Gastrocnemius medialis (tissue), 4 donors: ENCODE measurements at regions of chr4 and their contacts with region 1.

Region 1: DNA sequence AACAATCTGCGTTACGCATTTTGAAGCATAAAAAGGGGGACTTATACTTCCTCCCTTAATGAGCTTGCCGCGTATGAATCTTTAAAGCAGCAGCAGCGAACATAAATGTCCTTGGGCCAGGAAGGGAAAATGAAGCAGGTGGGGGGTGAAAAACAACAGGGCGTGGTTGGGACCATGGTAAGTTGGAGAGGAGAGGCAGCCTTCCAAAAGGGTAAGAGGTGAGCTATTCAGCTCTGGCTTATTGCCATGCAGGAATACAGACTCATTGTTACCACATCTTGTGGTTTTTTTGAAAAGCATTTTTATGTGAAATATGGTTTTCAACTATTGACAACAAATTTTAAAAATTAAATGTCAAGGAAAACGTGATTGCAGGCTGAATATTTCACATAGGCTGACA is 710.7 kb upstream of the FAM241A start:
- DNase-seq: no peak
- ATAC-seq: no peak
- H3K4me3 ChIP-seq: no peak overlapping the region
- H3K27ac ChIP-seq: no peak overlapping the region
- H3K4me1 ChIP-seq: no peaks in the 10 kb centered on the region
- H3K27me3 ChIP-seq: no peaks in the 10 kb centered on the region
- CTCF ChIP-seq: no peak
- POLR2A ChIP-seq: no peak

Region 2: DNA sequence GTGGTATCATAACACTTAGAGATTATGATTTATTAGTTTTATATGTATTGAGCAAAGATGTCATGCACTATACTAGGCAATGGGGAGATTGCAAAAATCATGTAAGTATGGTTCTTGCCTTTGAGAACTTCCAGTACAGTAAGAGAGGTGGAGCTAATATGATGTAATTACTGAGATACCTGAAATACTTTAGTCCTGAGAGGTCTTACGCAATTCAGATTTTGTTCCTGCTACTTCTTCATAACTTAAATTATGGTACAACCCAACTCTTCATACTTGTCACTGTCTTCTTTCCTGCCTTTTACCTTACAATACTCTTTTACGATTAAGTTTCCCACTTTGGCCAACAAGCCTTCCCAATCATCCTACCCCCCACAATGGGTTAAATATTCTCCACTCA is 247.5 kb before region 1 on chr4:
- in situ Hi-C with region 1: no loop called
- intact Hi-C with region 1: loop called (anchors 5 kb)
- DNase-seq: no peak
- ATAC-seq: no peak
- H3K4me3 ChIP-seq: no peak overlapping the region
- H3K27ac ChIP-seq: no peak overlapping the region
- H3K4me1 ChIP-seq: no peaks in the 10 kb centered on the region
- H3K27me3 ChIP-seq: no peaks in the 10 kb centered on the region
- CTCF ChIP-seq: no peak
- POLR2A ChIP-seq: no peak

Region 3: GRCh38 chr4:111595456-111595855 is 160.9 kb after region 1 on chr4:
- in situ Hi-C with region 1: no loop called
- intact Hi-C with region 1: no loop called
- DNase-seq: no peak
- ATAC-seq: no peak
- H3K4me3 ChIP-seq: no peak overlapping the region
- H3K27ac ChIP-seq: no peak overlapping the region
- H3K4me1 ChIP-seq: no peaks in the 10 kb centered on the region
- H3K27me3 ChIP-seq: no peaks in the 10 kb centered on the region
- CTCF ChIP-seq: no peak
- POLR2A ChIP-seq: no peak